Calu3 (cell line): ENCODE measurements at regions of chr7 and their contacts with region 1.

Region 1: DNA sequence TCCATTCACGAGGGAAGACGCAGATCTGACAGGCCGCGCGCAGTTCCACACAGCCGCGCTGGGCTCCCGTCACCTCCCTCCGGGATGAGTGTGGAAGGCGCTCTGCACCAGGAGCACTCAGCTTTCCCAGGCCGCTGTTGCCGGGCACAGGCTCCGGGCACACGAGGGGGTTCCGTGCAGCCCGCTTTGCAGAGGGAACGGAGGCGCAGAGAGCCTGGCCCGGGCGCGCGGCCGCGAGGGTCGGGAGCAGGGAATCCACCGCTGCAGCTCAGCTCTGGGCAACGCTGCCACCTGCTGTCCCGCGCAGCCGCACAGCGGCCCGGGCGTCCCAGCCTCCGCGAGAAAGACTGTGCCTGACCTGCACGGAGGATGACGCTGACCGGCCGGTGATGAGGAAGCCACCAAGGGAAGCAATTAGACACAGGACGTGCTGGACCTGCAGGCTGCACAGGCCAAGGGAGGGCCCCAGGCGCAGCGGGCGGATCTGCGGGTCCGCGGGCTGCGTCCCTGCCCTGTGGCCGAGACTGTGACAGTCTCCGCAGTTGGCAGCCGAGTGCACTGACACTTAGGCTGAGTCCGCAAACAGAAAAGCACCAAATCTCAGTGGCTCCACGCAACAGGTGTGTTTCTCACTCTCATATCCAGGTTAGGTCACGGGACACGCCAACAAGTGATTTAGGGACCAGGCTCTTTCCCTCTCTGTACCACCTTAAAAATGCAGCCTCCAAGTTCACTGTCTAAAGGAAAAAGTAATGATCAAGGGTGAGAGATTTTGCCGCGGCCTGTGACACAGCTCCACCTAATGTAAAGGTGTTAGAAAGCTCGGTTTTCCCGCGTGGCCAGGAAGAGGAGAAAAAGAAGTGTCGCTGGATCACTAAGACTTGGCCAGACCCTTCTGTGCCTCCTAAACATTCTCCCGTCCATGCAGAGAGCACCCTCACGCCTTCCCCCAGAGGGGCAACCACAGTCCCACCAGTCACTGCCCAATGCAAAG is 94.5 kb downstream of the SEC61G start:
- DNase-seq: peak; percentile 88
- H3K4me3 Mint-ChIP-seq: peak overlapping the region; percentile 65
- H3K27ac Mint-ChIP-seq: no peak overlapping the region
- H3K4me1 Mint-ChIP-seq: peaks cover 22% of the 10 kb centered on the region
- H3K27me3 Mint-ChIP-seq: peaks cover 80% of the 10 kb centered on the region
- CTCF ChIP-seq: peak; percentile 56

Region 2: GRCh38 chr7:54477083-54477482 is 187.4 kb before region 1 on chr7:
- CTCF ChIA-PET with region 1: no interaction called
- intact Hi-C with region 1: loop called (anchors 5 kb)
- DNase-seq: no peak
- H3K4me3 Mint-ChIP-seq: no peak overlapping the region
- H3K27ac Mint-ChIP-seq: no peak overlapping the region
- H3K4me1 Mint-ChIP-seq: no peaks in the 10 kb centered on the region
- H3K27me3 Mint-ChIP-seq: no peaks in the 10 kb centered on the region
- CTCF ChIP-seq: peak; percentile 18

Region 3: GRCh38 chr7:54546986-54547314 is 117.6 kb before region 1 on chr7:
- CTCF ChIA-PET with region 1: interaction called, 7 read pairs
- intact Hi-C with region 1: loop called (anchors 1 kb)
- DNase-seq: no peak
- H3K4me3 Mint-ChIP-seq: peak overlapping the region; percentile 71
- H3K27ac Mint-ChIP-seq: no peak overlapping the region
- H3K4me1 Mint-ChIP-seq: no peaks in the 10 kb centered on the region
- H3K27me3 Mint-ChIP-seq: peaks cover 61% of the 10 kb centered on the region
- CTCF ChIP-seq: no peak

Region 4: GRCh38 chr7:54653905-54654304 is 10.6 kb before region 1 on chr7:
- CTCF ChIA-PET with region 1: interaction called, 6 read pairs
- intact Hi-C with region 1: loop called (anchors 1 kb)
- DNase-seq: no peak
- H3K4me3 Mint-ChIP-seq: no peak overlapping the region
- H3K27ac Mint-ChIP-seq: no peak overlapping the region
- H3K4me1 Mint-ChIP-seq: no peaks in the 10 kb centered on the region
- H3K27me3 Mint-ChIP-seq: peaks cover 60% of the 10 kb centered on the region
- CTCF ChIP-seq: no peak

Region 5: GRCh38 chr7:54678763-54679489 is 14.4 kb after region 1 on chr7:
- CTCF ChIA-PET with region 1: no interaction called
- intact Hi-C with region 1: loop called (anchors 1 kb)
- DNase-seq: no peak
- H3K4me3 Mint-ChIP-seq: no peak overlapping the region
- H3K27ac Mint-ChIP-seq: no peak overlapping the region
- H3K4me1 Mint-ChIP-seq: no peaks in the 10 kb centered on the region
- H3K27me3 Mint-ChIP-seq: peaks cover 76% of the 10 kb centered on the region
- CTCF ChIP-seq: no peak

Region 6: DNA sequence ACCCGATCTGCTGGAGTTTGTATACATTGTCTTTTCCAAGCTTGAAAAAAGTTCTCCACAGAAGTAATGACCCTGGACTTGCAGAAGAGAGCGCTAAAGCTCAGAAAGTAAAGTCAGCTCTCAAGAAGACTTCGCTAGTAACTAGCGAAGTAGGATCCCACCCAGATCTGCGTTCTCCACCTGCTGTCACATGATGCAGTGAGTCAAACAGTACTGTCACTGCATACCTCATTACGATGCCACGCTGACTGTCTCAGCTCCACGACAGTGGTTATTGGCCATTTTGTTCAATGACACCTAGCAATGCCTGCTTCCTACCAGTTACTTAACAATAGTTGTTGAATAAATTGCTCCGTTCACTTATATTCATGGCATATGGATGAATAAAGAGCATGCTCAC is 124.1 kb after region 1 on chr7:
- CTCF ChIA-PET with region 1: no interaction called
- intact Hi-C with region 1: no loop called
- DNase-seq: peak; percentile 66
- H3K4me3 Mint-ChIP-seq: no peak overlapping the region
- H3K27ac Mint-ChIP-seq: peak overlapping the region; percentile 79
- H3K4me1 Mint-ChIP-seq: peaks cover 64% of the 10 kb centered on the region
- H3K27me3 Mint-ChIP-seq: no peaks in the 10 kb centered on the region
- CTCF ChIP-seq: peak; percentile 88